CD8-positive, alpha-beta memory T cell (primary cell): ENCODE measurements at regions of chr10 and their contacts with region 1.

Region 1: GRCh38 chr10:101214446-101215396 is 14.5 kb downstream of the LBX1 start:
- DNase-seq: peak; percentile 60 to 79 (median 65)
- H3K4me3 ChIP-seq: peak overlapping the region; percentile 50
- H3K4me3 Mint-ChIP-seq: peak overlapping the region; percentile 11 to 86 (median 68)
- H3K27ac ChIP-seq: no peak overlapping the region
- H3K27ac Mint-ChIP-seq: peak overlapping the region in 2 of 8 donors; percentile 3 to 78
- H3K4me1 ChIP-seq: peaks cover 40% of the 10 kb centered on the region
- H3K4me1 Mint-ChIP-seq: peaks cover 28 to 50% (median 40%) of the 10 kb centered on the region in 3 donors
- H3K27me3 ChIP-seq: peaks cover 66% of the 10 kb centered on the region
- H3K27me3 Mint-ChIP-seq: peaks cover 68 to 81% of the 10 kb centered on the region in 2 donors

Region 2: DNA sequence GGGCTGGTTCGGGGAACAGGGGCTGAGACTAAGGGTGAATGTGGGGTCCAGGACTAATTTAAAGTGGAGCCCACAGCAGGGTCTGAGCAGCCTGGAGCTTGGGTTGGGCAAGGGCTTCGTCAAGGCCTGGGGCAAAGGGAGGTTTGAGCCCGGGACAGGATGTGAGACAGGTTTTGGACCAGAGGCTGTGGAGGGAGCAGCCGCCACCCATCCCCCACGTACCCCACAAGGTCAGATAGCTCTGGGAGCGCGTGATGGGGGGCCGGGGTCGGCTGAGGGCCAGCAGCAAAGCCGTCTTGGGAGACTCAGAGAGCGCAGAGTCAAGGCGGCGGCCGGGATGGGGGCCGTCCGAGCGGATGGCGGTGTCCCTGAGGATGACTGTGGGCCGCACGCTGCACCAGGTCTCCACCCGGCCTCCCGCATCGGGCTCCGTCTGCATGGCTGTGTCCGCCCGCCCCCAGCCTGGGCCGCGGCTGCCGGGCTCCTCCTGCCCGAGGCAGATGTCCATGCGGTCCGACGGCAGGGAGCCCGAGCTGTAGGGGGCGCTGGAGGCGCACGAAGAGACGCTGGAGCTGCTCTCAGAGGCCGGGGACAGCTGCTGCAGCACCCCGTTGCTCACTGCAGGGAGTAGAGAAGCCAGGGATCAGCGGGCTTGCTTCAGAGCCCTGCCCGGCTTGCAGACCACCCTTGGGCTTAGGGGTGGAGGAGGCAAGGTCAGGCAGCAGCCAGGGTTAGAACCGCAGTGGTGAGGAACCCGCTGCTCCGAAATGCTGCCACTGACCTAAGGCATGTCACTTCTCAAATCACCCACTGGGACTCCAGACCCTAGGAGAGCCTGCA is 195.9 kb before region 1 on chr10:
- CTCF ChIA-PET with region 1: no interaction called
- POLR2A ChIA-PET with region 1: no interaction called
- DNase-seq: peak; percentile 36 to 79 (median 53)
- H3K4me3 ChIP-seq: no peak overlapping the region
- H3K4me3 Mint-ChIP-seq: no peak overlapping the region
- H3K27ac ChIP-seq: no peak overlapping the region
- H3K27ac Mint-ChIP-seq: no peak overlapping the region
- H3K4me1 ChIP-seq: peaks cover 3% of the 10 kb centered on the region
- H3K4me1 Mint-ChIP-seq: peaks cover 2 to 10% (median 6%) of the 10 kb centered on the region in 3 donors
- H3K27me3 ChIP-seq: peaks cover 20% of the 10 kb centered on the region
- H3K27me3 Mint-ChIP-seq: peaks cover 36 to 52% of the 10 kb centered on the region in 2 donors

Region 3: DNA sequence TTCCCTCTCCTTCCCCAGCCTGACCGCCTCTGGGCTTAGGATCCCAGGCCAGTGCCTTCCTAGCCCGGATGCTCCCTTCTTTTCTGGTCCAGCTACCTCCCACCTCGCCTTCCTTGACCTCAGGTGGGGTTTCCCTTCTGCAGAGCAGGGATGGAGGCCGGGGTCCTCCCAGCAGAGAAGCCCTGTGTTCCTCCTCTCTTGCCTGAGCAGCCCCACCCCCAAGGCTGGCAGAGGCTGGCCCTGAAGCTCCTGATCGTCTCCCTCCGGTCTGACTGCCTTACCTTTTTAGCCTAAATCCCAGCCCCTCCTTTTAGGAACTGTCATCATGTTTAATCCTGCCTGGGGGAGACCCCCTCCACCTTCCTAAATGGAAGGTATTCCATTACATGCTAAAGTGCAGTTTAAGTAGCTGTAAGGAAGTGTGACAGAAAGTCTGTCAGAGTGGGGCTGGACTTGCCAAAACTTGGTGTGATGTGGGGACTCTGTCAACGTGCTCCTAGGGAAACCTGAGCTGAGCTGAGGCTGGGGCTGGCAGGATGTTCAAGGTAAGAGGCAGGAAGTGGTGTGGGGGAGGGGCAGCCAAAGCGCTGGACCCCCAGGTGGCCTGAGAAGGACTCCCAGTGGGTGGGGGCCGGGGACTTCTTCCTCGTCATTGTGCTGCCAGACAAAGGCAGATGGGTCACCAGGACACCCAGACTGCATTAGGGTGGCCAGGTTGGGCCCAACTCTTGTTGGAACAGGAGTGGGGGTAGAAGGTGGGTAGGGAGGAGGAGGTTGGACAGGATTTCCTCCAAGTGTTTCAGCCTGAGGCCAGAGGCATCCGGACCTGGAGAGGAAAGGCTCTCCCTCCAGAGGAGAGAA is 24.9 kb before region 1 on chr10:
- CTCF ChIA-PET with region 1: no interaction called
- POLR2A ChIA-PET with region 1: no interaction called
- DNase-seq: no peak
- H3K4me3 ChIP-seq: no peak overlapping the region
- H3K4me3 Mint-ChIP-seq: no peak overlapping the region
- H3K27ac ChIP-seq: no peak overlapping the region
- H3K27ac Mint-ChIP-seq: no peak overlapping the region
- H3K4me1 ChIP-seq: no peaks in the 10 kb centered on the region
- H3K4me1 Mint-ChIP-seq: no peaks in the 10 kb centered on the region
- H3K27me3 ChIP-seq: no peaks in the 10 kb centered on the region
- H3K27me3 Mint-ChIP-seq: peaks cover 11 to 19% of the 10 kb centered on the region in 2 donors

Region 4: DNA sequence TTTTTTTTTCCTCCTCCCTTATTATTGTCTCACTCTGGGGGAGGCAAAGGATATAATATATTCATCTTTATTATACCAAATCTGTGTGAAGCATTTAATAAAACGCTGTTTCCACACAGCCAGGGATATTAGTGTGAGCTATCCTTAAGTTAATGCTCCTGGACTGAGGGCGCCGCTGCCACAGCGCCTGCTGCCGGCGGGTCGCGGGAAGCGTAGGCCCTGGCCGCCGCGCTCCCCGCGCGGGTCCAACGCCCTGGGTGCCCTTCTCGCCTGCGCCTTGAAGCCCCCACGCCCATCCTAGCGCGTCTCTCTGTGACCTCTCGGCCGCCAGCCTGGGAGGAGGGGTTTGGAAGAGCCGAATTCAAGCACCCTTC is 24.0 kb after region 1 on chr10:
- CTCF ChIA-PET with region 1: interaction called, 32 read pairs
- POLR2A ChIA-PET with region 1: no interaction called
- DNase-seq: no peak
- H3K4me3 ChIP-seq: no peak overlapping the region
- H3K4me3 Mint-ChIP-seq: no peak overlapping the region
- H3K27ac ChIP-seq: no peak overlapping the region
- H3K27ac Mint-ChIP-seq: no peak overlapping the region
- H3K4me1 ChIP-seq: peaks cover 23% of the 10 kb centered on the region
- H3K4me1 Mint-ChIP-seq: peaks cover 14 to 26% (median 15%) of the 10 kb centered on the region in 3 donors
- H3K27me3 ChIP-seq: peaks cover 64% of the 10 kb centered on the region
- H3K27me3 Mint-ChIP-seq: peaks cover 53 to 77% of the 10 kb centered on the region in 2 donors

Region 5: GRCh38 chr10:101272229-101272868 is 57.6 kb after region 1 on chr10:
- CTCF ChIA-PET with region 1: interaction called, 14 read pairs
- POLR2A ChIA-PET with region 1: no interaction called
- DNase-seq: peak; percentile 26 to 66 (median 39)
- H3K4me3 ChIP-seq: no peak overlapping the region
- H3K4me3 Mint-ChIP-seq: no peak overlapping the region
- H3K27ac ChIP-seq: no peak overlapping the region
- H3K27ac Mint-ChIP-seq: peak overlapping the region in 1 of 8 donors; percentile 72
- H3K4me1 ChIP-seq: no peaks in the 10 kb centered on the region
- H3K4me1 Mint-ChIP-seq: peaks cover 0 to 5% (median 2%) of the 10 kb centered on the region in 3 donors
- H3K27me3 ChIP-seq: no peaks in the 10 kb centered on the region
- H3K27me3 Mint-ChIP-seq: peaks cover 22 to 47% of the 10 kb centered on the region in 2 donors

Region 6: GRCh38 chr10:101291331-101292193 is 76.8 kb after region 1 on chr10:
- CTCF ChIA-PET with region 1: interaction called, 69 read pairs
- POLR2A ChIA-PET with region 1: no interaction called
- DNase-seq: peak; percentile 15 to 62 (median 26)
- H3K4me3 ChIP-seq: no peak overlapping the region
- H3K4me3 Mint-ChIP-seq: peak overlapping the region in 6 of 7 donors; percentile 74 to 96 (median 86)
- H3K27ac ChIP-seq: no peak overlapping the region
- H3K27ac Mint-ChIP-seq: no peak overlapping the region
- H3K4me1 ChIP-seq: peaks cover 14% of the 10 kb centered on the region
- H3K4me1 Mint-ChIP-seq: peaks cover 0 to 20% (median 13%) of the 10 kb centered on the region in 3 donors
- H3K27me3 ChIP-seq: peaks cover 54% of the 10 kb centered on the region
- H3K27me3 Mint-ChIP-seq: peaks cover 61 to 76% of the 10 kb centered on the region in 2 donors

Region 7: GRCh38 chr10:101467286-101467770 is 252.6 kb after region 1 on chr10:
- CTCF ChIA-PET with region 1: interaction called, 21 read pairs
- POLR2A ChIA-PET with region 1: interaction called, 3 read pairs
- DNase-seq: peak in 3 of 5 donors; percentile 38 to 49 (median 41)
- H3K4me3 ChIP-seq: no peak overlapping the region
- H3K4me3 Mint-ChIP-seq: peak overlapping the region in 1 of 7 donors; percentile 37
- H3K27ac ChIP-seq: no peak overlapping the region
- H3K27ac Mint-ChIP-seq: no peak overlapping the region
- H3K4me1 ChIP-seq: peaks cover 6% of the 10 kb centered on the region
- H3K4me1 Mint-ChIP-seq: peaks cover 6 to 9% (median 8%) of the 10 kb centered on the region in 3 donors
- H3K27me3 ChIP-seq: no peaks in the 10 kb centered on the region
- H3K27me3 Mint-ChIP-seq: no peaks in the 10 kb centered on the region

Region 8: DNA sequence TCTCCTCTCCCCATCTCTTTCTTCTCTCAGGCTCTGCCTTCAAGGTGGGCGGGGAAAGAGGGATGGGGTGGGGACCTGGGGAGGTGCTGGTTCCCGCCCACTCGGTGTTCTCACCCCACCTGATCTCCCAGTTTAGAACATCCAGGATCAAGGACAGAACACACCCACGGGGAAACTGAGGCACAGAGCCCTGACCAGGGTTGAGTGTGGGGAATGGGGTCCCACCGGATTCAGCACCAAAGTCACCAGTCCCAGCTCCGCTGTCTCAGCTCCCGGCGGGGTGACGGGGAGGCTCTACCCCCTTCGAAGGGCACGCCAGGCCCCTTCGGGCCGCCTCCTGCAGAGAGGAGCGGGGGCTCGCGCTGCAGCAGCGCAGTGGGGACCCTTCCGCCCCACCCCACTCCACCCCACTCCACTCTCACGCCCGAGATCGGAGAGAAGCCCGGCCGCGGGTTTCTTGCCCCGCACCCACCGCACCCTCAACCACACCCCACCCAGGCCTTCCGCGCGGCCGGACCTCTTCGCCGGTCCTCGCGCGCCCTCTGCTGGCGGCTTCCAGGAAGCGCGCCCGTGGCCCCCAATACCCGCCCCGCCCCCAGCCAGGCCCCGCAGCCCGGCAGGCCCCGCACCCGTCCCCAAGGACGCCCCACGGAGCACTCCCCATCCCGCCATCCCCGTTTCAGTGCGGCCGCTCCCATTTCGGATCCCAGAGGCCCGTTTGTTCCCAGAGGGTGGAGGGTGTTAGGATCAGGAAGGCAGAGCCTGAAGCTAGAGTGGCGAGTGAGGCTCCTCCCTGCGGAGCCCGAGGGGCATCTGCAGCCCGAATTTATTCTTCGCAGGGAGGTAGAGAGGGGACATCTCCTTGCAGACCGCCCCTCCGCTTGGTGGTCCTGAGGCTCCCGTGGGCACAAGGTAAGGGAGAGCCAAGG is 355.4 kb after region 1 on chr10:
- CTCF ChIA-PET with region 1: interaction called, 60 read pairs
- POLR2A ChIA-PET with region 1: interaction called, 3 read pairs
- DNase-seq: peak; percentile 73 to 85 (median 78)
- H3K4me3 ChIP-seq: peak overlapping the region; percentile 75
- H3K4me3 Mint-ChIP-seq: peak overlapping the region; percentile 50 to 89 (median 77)
- H3K27ac ChIP-seq: no peak overlapping the region
- H3K27ac Mint-ChIP-seq: no peak overlapping the region
- H3K4me1 ChIP-seq: peaks cover 14% of the 10 kb centered on the region
- H3K4me1 Mint-ChIP-seq: peaks cover 11 to 21% (median 15%) of the 10 kb centered on the region in 3 donors
- H3K27me3 ChIP-seq: peaks cover 36% of the 10 kb centered on the region
- H3K27me3 Mint-ChIP-seq: peaks cover 32 to 41% of the 10 kb centered on the region in 2 donors